GM12878 (cell line): ENCODE measurements at regions of chr2 and their contacts with region 1.

Region 1: GRCh38 chr2:147989809-147990403 is 30.6 kb downstream of the ORC4 start:
- DNase-seq: peak; percentile 31
- ATAC-seq: peak; percentile 91
- H3K4me3 ChIP-seq: no peak overlapping the region
- H3K27ac ChIP-seq: no peak overlapping the region
- H3K4me1 ChIP-seq: peaks cover 3% of the 10 kb centered on the region; the same call in 1 of the 2 replicates
- H3K27me3 ChIP-seq: no peaks in the 10 kb centered on the region
- CTCF ChIP-seq: peak; percentile 47 to 93 (median 64); a peak in 4 of 6 replicates
- EP300 ChIP-seq: no peak
- POLR2A ChIP-seq: no peak
- RAD21 ChIP-seq: peak; percentile 95

Region 2: DNA sequence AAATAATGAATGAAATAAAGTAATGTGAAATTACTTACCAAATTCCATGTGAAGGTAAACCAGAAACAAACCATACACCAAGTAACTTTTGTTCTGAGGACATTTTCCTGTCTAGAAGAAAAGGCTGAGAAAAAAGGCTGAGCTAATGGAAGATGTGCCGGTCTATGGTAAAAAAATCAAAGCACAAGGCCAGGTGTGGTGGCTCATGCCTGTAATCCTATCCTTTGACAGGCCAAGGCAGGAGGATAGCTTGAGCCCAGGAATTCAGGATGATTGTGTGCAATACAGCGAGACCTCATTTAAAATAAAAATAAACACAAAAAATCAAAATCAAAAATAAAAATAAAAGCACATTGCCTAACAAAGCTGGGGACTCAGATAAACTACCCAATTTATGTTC is 24.0 kb after region 1 on chr2:
- CTCF ChIA-PET with region 1: interaction called, 11 read pairs
- POLR2A ChIA-PET with region 1: no interaction called
- RAD21 ChIA-PET with region 1: interaction called, 6 read pairs
- SMC1A ChIA-PET with region 1: interaction called, 10 read pairs
- in situ Hi-C with region 1: no loop called
- intact Hi-C with region 1: no loop called
- DNase-seq: no peak
- ATAC-seq: no peak
- H3K4me3 ChIP-seq: no peak overlapping the region
- H3K27ac ChIP-seq: no peak overlapping the region
- H3K4me1 ChIP-seq: no peaks in the 10 kb centered on the region
- H3K27me3 ChIP-seq: no peaks in the 10 kb centered on the region
- CTCF ChIP-seq: no peak
- EP300 ChIP-seq: no peak
- POLR2A ChIP-seq: no peak
- RAD21 ChIP-seq: no peak

Region 3: GRCh38 chr2:148027822-148028221 is 37.9 kb after region 1 on chr2:
- CTCF ChIA-PET with region 1: interaction called, 10 read pairs
- POLR2A ChIA-PET with region 1: no interaction called
- RAD21 ChIA-PET with region 1: interaction called, 8 read pairs
- SMC1A ChIA-PET with region 1: interaction called, 9 read pairs
- in situ Hi-C with region 1: no loop called
- intact Hi-C with region 1: no loop called
- DNase-seq: no peak
- ATAC-seq: peak; percentile 49
- H3K4me3 ChIP-seq: no peak overlapping the region
- H3K27ac ChIP-seq: no peak overlapping the region
- H3K4me1 ChIP-seq: no peaks in the 10 kb centered on the region
- H3K27me3 ChIP-seq: no peaks in the 10 kb centered on the region
- CTCF ChIP-seq: no peak
- EP300 ChIP-seq: no peak
- POLR2A ChIP-seq: no peak
- RAD21 ChIP-seq: no peak

Region 4: GRCh38 chr2:148110184-148110583 is 120.3 kb after region 1 on chr2:
- CTCF ChIA-PET with region 1: interaction called, 3 read pairs
- POLR2A ChIA-PET with region 1: no interaction called
- RAD21 ChIA-PET with region 1: interaction called, 6 read pairs
- SMC1A ChIA-PET with region 1: no interaction called
- in situ Hi-C with region 1: no loop called
- intact Hi-C with region 1: loop called (anchors 5 kb)
- DNase-seq: no peak
- ATAC-seq: peak; percentile 37; the same call in 2 of the 3 replicates
- H3K4me3 ChIP-seq: no peak overlapping the region
- H3K27ac ChIP-seq: no peak overlapping the region
- H3K4me1 ChIP-seq: no peaks in the 10 kb centered on the region
- H3K27me3 ChIP-seq: no peaks in the 10 kb centered on the region
- CTCF ChIP-seq: no peak
- EP300 ChIP-seq: no peak
- POLR2A ChIP-seq: no peak
- RAD21 ChIP-seq: no peak

Region 5: GRCh38 chr2:148251993-148252392 is 262.1 kb after region 1 on chr2:
- CTCF ChIA-PET with region 1: no interaction called
- POLR2A ChIA-PET with region 1: no interaction called
- RAD21 ChIA-PET with region 1: no interaction called
- SMC1A ChIA-PET with region 1: no interaction called
- in situ Hi-C with region 1: no loop called
- intact Hi-C with region 1: no loop called
- DNase-seq: no peak
- ATAC-seq: no peak
- H3K4me3 ChIP-seq: no peak overlapping the region
- H3K27ac ChIP-seq: no peak overlapping the region
- H3K4me1 ChIP-seq: no peaks in the 10 kb centered on the region
- H3K27me3 ChIP-seq: no peaks in the 10 kb centered on the region
- CTCF ChIP-seq: no peak
- EP300 ChIP-seq: no peak
- POLR2A ChIP-seq: no peak
- RAD21 ChIP-seq: no peak

Region 6: DNA sequence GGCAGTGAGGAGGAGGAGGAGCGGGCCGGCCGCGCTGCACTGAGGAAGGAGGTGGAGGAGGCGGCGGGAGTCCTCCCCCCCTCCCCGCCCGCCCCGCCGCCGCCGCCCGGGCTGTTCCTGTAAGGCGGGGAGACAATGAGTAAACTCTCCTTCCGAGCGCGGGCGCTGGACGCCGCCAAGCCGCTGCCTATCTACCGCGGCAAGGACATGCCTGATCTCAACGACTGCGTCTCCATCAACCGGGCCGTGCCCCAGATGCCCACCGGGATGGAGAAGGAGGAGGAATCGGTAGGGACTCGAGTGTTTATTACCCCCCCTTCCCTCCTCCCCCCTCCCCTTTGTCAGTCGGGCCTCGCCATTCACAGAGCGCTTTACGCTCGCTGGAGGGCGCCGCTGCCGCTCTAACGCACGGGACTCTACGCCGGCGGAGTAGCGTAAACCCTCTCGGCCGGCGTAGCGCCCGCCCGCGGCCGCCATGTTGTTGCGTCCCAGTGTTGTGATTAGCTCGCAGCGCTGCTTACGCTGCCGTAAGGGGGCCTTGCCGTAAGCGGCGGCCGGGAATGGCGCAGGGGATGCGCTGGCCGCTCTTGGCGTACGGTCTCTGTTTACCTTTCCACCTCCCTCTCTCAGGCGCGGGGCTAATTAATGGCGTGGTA is 655.1 kb after region 1 on chr2:
- CTCF ChIA-PET with region 1: interaction called, 3 read pairs
- POLR2A ChIA-PET with region 1: no interaction called
- RAD21 ChIA-PET with region 1: interaction called, 3 read pairs
- SMC1A ChIA-PET with region 1: interaction called, 6 read pairs
- in situ Hi-C with region 1: no loop called
- intact Hi-C with region 1: loop called (anchors 10 kb)
- DNase-seq: peak; percentile 69
- ATAC-seq: peak; percentile 83
- H3K4me3 ChIP-seq: peak overlapping the region; percentile 88
- H3K27ac ChIP-seq: peak overlapping the region; percentile 72
- H3K4me1 ChIP-seq: peaks cover 15% of the 10 kb centered on the region
- H3K27me3 ChIP-seq: peaks cover 0 to 5% of the 10 kb centered on the region in 2 experiments; a peak in 2 of 4 replicates
- CTCF ChIP-seq: peak in 2 of 3 experiments; percentile 39 to 41; a peak in 3 of 6 replicates
- EP300 ChIP-seq: no peak
- POLR2A ChIP-seq: peak; percentile 78
- RAD21 ChIP-seq: peak; percentile 30